ENCODE measurements at regions of chr3 and their contacts with region 1.

Region 1: DNA sequence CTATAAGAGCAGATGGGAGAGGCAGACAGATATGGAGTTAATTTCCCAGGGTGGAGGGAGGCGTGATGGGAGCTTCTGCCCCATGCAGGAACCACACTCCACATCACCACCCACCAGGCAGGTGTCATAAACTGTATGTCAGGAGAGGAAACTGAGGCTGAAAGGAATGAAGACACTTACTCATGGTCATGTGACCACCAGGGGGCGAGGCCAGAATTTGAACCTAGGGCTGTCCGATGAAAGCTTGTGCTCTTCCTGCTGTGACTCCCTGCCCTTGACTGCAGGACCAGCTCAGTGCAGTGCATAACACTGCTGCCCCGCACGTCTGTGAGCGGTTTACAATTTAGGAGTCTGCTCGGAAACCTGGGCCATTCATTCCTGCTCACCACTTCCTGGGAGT is 28.8 kb downstream of the NUP210 start:
- H3K4me3 ChIP-seq: no peak overlapping the region
- H3K27ac ChIP-seq: no peak overlapping the region
- H3K4me1 ChIP-seq: no peaks in the 10 kb centered on the region
- CTCF ChIP-seq: peak; percentile 40; the same call in 1 of the 2 replicates

Region 2: DNA sequence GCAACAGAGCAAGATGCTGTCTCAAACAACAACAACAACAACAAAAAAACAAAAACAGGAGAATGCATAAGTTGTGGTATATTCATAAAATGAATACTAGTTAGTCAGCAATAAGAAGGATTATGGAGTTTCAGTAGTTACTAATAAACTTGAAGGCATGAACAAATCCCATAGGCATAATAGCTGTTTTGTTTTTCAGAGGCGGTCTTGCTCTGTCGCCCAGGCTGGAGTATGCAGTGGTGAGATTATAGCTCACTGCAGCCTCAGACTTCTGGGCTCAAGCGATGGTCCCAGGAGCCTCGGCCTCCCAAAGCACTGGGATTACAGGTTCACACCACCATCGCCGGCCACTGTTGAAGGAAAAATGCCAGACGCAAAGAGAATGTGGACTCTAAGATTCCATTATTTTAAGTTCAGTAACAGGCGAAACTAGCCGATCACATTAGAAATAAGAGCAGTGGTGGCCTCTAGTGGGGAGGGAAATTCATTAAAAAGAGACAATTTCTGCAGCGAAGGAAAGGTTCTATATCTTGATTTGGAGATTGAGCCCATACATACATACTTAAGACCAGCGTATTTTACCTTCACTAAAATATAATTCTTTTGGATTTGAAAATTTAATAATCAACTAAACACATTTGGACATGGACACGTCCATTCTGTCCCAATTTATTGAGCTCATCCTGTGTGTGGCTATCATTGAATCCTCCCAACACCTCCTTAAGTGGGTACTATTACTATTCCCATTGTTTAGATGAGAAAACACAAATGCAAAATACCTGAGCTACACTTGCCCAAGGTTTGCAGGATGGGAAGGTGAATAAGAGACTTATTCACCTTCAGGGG is 61.4 kb after region 1 on chr3:
- CTCF ChIA-PET with region 1: interaction called, 16 read pairs
- POLR2A ChIA-PET with region 1: no interaction called
- H3K4me3 ChIP-seq: no peak overlapping the region
- H3K27ac ChIP-seq: no peak overlapping the region; the same call in 1 of the 2 replicates
- H3K4me1 ChIP-seq: no peaks in the 10 kb centered on the region
- CTCF ChIP-seq: peak; percentile 58; the same call in 1 of the 2 replicates

Measured in HEK293 (cell line).